Naive thymus-derived CD4-positive, alpha-beta T cell (primary cell): ENCODE measurements at regions of chrX and their contacts with region 1.

Region 1: GRCh38 chrX:109974906-109975655 is 27.8 kb upstream of the TMEM164 start:
- DNase-seq: no peak
- ATAC-seq: no peak
- H3K4me3 ChIP-seq: no peak overlapping the region
- H3K4me3 Mint-ChIP-seq: peak overlapping the region in 1 of 10 donors; percentile 64
- H3K27ac ChIP-seq: no peak overlapping the region
- H3K27ac Mint-ChIP-seq: peak overlapping the region in 1 of 9 donors; percentile 68
- H3K4me1 ChIP-seq: no peaks in the 10 kb centered on the region
- H3K4me1 Mint-ChIP-seq: peaks cover 0 to 21% (median 0%) of the 10 kb centered on the region in 7 donors
- H3K27me3 ChIP-seq: no peaks in the 10 kb centered on the region
- H3K27me3 Mint-ChIP-seq: peaks cover 6 to 9% (median 7%) of the 10 kb centered on the region in 5 donors

Region 2: GRCh38 chrX:110002300-110003166 is 27.5 kb after region 1 on chrX and contains the start of gene TMEM164:
- CTCF ChIA-PET with region 1: no interaction called
- POLR2A ChIA-PET with region 1: no interaction called
- intact Hi-C with region 1: loop called in 1 of 2 experiments (anchors 5 kb)
- DNase-seq: peak; percentile 58 to 82 (median 75)
- ATAC-seq: peak; percentile 87
- H3K4me3 ChIP-seq: peak within 1 kb of the TSS; percentile 54
- H3K4me3 Mint-ChIP-seq: peak within 1 kb of the TSS; percentile 76 to 96 (median 88)
- H3K27ac ChIP-seq: peak within 1 kb of the TSS; percentile 64
- H3K27ac Mint-ChIP-seq: peak within 1 kb of the TSS; percentile 82 to 95 (median 88)
- H3K4me1 ChIP-seq: no peaks in the 10 kb centered on the region
- H3K4me1 Mint-ChIP-seq: peaks cover 14 to 42% (median 34%) of the 10 kb centered on the region in 7 donors
- H3K27me3 ChIP-seq: no peaks in the 10 kb centered on the region
- H3K27me3 Mint-ChIP-seq: no peaks in the 10 kb centered on the region
- total RNA-seq, gene TMEM164: 16.3 to 30.1 (median 17.9) TPM